ENCODE measurements at regions of chr2 and their contacts with region 1.

Region 1: DNA sequence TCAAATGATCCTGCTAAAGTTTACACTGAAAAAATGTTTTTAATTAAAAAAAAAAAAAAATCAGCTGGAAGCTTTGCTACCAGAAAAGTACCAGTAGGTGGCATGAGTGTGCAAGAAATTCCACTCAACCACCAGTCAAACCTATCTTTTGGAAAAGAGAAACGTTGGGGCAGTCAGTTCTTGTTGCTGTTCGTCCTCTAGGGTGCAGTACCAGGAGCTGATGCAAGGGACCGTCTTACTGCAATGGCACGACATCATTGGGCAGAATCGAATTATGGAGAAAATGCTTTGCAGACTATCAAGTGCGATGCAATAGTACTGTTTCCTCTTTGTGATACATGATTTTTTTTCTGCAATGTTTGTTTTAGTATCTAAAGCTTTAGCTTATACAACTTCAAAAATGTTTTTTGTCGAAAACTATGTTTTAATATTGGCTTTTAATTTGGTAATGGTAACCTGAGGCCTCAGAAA is 18.3 kb downstream of the YPEL5 start:
- DNase-seq: peak; percentile 54 to 84
- H3K4me3 ChIP-seq: no peak overlapping the region
- H3K27ac ChIP-seq: no peak overlapping the region
- H3K4me1 ChIP-seq: peaks cover 21% of the 10 kb centered on the region
- H3K27me3 ChIP-seq: peaks cover 2% of the 10 kb centered on the region; the same call in 1 of the 2 replicates
- CTCF ChIP-seq: peak; percentile 90

Region 2: DNA sequence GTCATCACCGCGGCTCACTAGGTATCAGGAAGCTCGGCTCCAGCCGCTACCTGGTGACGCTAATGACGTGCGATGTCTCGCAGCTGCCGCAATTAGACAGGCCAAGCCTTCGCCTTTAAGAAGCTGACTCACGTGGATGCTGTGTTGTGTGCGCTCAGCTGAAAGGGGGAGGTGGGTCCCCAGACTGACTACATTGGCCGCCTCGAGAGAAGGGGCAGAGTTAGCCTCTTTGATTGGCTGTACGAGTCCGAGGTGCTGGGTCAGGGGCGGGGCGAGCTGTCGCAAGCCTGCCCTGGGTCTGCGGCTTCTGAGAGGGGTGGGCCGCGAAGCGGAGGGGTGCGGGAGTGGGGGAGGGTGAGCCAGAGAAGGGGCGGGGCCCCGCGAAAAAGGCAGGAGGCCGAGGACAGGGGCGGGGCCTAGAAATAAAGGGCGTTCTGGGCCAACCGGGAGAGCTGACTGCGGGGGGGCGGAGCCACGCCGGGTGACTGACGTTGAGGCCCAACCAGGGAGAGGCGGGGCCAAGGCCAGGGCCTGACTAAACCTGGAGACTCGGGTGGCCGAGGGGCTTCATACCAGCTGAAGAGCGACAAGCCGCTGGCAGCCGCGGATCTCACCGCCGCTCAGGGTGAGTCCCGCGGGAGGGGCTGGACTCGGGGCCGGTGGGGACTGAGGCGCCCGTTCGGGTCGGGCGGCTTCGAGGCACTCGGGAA is 18.5 kb before region 1 on chr2 and contains the start of gene YPEL5:
- CTCF ChIA-PET with region 1: interaction called, 24 read pairs
- POLR2A ChIA-PET with region 1: interaction called, 10 read pairs
- intact Hi-C with region 1: no loop called
- DNase-seq: peak; percentile 99 to 100
- H3K4me3 ChIP-seq: peak within 1 kb of the TSS; percentile 83
- H3K27ac ChIP-seq: peak within 1 kb of the TSS; percentile 50
- H3K4me1 ChIP-seq: peaks cover 39% of the 10 kb centered on the region
- H3K27me3 ChIP-seq: no peaks in the 10 kb centered on the region
- CTCF ChIP-seq: no peak
- total RNA-seq, gene YPEL5: 56.9 and 67.5 TPM in 2 replicates

Region 3: DNA sequence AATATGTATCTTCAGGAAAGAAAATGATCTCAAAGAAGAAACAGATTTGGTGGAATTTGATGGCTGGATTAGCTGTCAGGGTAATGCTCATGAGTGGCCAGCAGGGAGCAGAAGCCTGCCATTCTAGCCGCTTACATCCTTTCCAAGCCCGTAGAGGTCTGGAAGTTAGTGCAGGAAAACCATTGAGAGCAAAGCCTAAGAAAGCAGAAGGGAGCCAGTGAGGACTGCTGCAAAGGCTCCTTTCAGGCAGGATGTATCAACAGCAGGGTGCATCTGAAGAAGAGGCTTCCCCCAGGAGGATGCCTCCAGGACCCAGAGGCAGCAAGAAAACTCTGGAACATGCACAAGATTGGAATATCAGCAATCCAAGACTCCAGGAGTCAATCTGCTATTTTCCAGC is 43.4 kb after region 1 on chr2:
- CTCF ChIA-PET with region 1: interaction called, 6 read pairs
- POLR2A ChIA-PET with region 1: interaction called, 7 read pairs
- intact Hi-C with region 1: loop called (anchors 2 kb)
- DNase-seq: peak; percentile 56 to 59
- H3K4me3 ChIP-seq: no peak overlapping the region
- H3K27ac ChIP-seq: no peak overlapping the region
- H3K4me1 ChIP-seq: no peaks in the 10 kb centered on the region
- H3K27me3 ChIP-seq: no peaks in the 10 kb centered on the region
- CTCF ChIP-seq: peak; percentile 97

Region 4: GRCh38 chr2:31170071-31170698 is 1005.1 kb after region 1 on chr2:
- CTCF ChIA-PET with region 1: no interaction called
- POLR2A ChIA-PET with region 1: no interaction called
- intact Hi-C with region 1: loop called (anchors 1 kb)
- DNase-seq: peak; percentile 42 to 53
- H3K4me3 ChIP-seq: no peak overlapping the region
- H3K27ac ChIP-seq: no peak overlapping the region
- H3K4me1 ChIP-seq: no peaks in the 10 kb centered on the region
- H3K27me3 ChIP-seq: no peaks in the 10 kb centered on the region
- CTCF ChIP-seq: peak; percentile 99

Measured in PC-9 (cell line).